ENCODE measurements at regions of chr13 and their contacts with region 1.

Region 1: DNA sequence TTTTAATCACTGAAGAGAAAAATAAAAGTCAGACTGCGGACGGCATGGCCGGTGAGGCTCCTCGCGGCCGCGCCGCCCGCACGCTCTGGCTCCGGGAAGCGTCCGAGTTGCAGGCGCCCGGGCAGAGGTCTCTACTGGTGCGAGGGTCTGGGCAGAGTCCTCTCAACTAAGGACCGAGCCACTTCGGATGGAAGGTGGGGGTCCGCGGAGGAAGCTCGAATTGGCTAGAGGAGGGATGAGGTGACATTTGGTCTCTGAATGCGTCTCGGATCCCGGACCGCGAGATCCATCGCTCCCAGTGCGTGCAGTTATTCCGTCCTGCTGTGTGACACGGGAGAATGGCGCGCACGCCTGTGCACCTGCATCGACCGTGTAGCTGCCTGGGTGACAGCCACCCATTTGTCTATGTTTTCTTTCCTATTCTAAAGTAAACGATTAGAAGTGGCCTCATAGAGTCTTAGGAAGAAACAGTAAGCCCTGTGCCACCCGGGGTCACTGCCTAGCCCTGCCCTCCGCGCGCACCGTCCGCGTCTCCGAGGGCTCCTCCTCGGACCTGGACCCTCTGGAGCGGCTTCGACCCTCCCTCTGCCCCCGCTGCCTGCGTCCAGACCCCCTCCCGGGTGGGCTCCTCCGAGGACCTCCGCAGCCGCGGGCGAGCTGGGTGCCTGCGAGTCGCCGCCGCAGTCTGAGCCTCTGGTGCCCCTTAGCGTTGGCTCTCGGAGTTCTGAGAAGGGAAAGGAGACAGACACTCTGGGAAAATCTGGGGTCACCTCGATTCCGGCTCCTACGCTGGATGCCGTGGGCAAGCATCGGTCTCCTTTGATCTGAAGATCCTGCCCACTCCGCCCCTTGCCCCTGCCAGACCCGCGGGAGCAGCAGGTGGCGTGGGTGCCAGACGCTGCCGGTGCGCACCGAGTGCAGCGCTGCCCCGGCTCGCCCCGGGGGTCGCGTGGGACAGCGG is 347.4 kb downstream of the LIG4 start:
- DNase-seq: peak; percentile 31 to 75 (median 69)
- H3K4me3 ChIP-seq: peak overlapping the region; percentile 34 to 84 (median 71)
- H3K27ac ChIP-seq: peak overlapping the region in 58 of 59 donors; percentile 6 to 89 (median 76)
- H3K27me3 ChIP-seq: peaks cover 0 to 26% (median 0%) of the 10 kb centered on the region in 45 donors
- CTCF ChIP-seq: peak in 52 of 56 donors; percentile 22 to 65 (median 49)

Region 2: GRCh38 chr13:107205303-107206104 is 662.5 kb before region 1 on chr13:
- intact Hi-C with region 1: loop called (anchors 2 to 5 kb)
- DNase-seq: peak; percentile 62 to 89 (median 76)
- H3K4me3 ChIP-seq: peak overlapping the region in 11 of 59 donors; percentile 0 to 27 (median 13)
- H3K27ac ChIP-seq: peak overlapping the region in 2 of 59 donors; percentile 34 to 40
- H3K27me3 ChIP-seq: no peaks in the 10 kb centered on the region
- CTCF ChIP-seq: peak; percentile 91 to 100 (median 97)

Region 3: GRCh38 chr13:107211073-107211472 is 656.9 kb before region 1 on chr13:
- intact Hi-C with region 1: loop called (anchors 2 to 5 kb)
- DNase-seq: peak; percentile 59 to 93 (median 84)
- H3K4me3 ChIP-seq: peak overlapping the region in 58 of 59 donors; percentile 9 to 64 (median 44)
- H3K27ac ChIP-seq: peak overlapping the region in 32 of 59 donors; percentile 0 to 67 (median 38)
- H3K27me3 ChIP-seq: no peaks in the 10 kb centered on the region
- CTCF ChIP-seq: peak; percentile 79 to 99 (median 96)

Region 4: GRCh38 chr13:107373551-107373950 is 494.4 kb before region 1 on chr13:
- intact Hi-C with region 1: loop called (anchors 5 kb)
- DNase-seq: no peak
- H3K4me3 ChIP-seq: peak overlapping the region in 23 of 59 donors; percentile 3 to 35 (median 15)
- H3K27ac ChIP-seq: peak overlapping the region in 1 of 59 donors; percentile 4
- H3K27me3 ChIP-seq: no peaks in the 10 kb centered on the region
- CTCF ChIP-seq: peak; percentile 30 to 82 (median 68)

Region 5: GRCh38 chr13:107743983-107744382 is 124.0 kb before region 1 on chr13:
- intact Hi-C with region 1: no loop called
- DNase-seq: no peak
- H3K4me3 ChIP-seq: no peak overlapping the region
- H3K27ac ChIP-seq: peak overlapping the region in 46 of 59 donors; percentile 1 to 88 (median 55)
- H3K27me3 ChIP-seq: no peaks in the 10 kb centered on the region
- CTCF ChIP-seq: no peak

Region 6: DNA sequence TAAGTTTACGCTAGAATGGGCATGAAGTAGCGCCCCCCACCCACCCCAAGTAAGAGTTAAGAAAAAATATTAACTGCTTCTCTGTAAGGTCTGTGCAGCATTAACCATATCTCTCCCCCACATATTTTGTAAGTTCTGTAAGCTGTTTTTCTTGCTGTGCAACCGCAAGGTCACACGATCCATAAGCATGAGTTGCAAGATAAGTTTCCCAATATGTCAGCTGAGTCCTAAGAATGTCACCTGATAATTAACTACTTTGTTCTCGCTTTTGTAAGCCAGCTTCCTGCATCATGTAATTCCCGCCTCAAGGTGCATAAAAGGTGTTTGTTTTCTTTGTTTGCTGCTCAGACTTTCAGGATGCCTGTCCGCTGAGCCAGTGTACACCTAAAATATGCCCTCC is 948.4 kb after region 1 on chr13:
- intact Hi-C with region 1: no loop called
- DNase-seq: no peak
- H3K4me3 ChIP-seq: no peak overlapping the region
- H3K27ac ChIP-seq: no peak overlapping the region
- H3K27me3 ChIP-seq: peaks cover 0 to 3% (median 0%) of the 10 kb centered on the region in 45 donors
- CTCF ChIP-seq: no peak

Measured in dorsolateral prefrontal cortex (tissue), 120 donors.